PC-9 (cell line): ENCODE measurements at regions of chr15 and their contacts with region 1.

Region 1: GRCh38 chr15:67065444-67066093 is at the start of gene SMAD3:
- DNase-seq: peak; percentile 73 to 92
- H3K4me3 ChIP-seq: peak within 1 kb of the TSS; percentile 88
- H3K27ac ChIP-seq: peak within 1 kb of the TSS; percentile 87
- H3K4me1 ChIP-seq: peaks cover 21% of the 10 kb centered on the region
- H3K27me3 ChIP-seq: no peaks in the 10 kb centered on the region
- CTCF ChIP-seq: no peak
- total RNA-seq, gene SMAD3: 99.5 and 109 TPM in 2 replicates

Region 2: GRCh38 chr15:66883322-66883911 is 182.2 kb before region 1 on chr15:
- CTCF ChIA-PET with region 1: no interaction called
- POLR2A ChIA-PET with region 1: no interaction called
- intact Hi-C with region 1: loop called (anchors 1 kb)
- DNase-seq: peak; percentile 96 to 97
- H3K4me3 ChIP-seq: no peak overlapping the region
- H3K27ac ChIP-seq: peak overlapping the region; percentile 74
- H3K4me1 ChIP-seq: peaks cover 35% of the 10 kb centered on the region
- H3K27me3 ChIP-seq: no peaks in the 10 kb centered on the region
- CTCF ChIP-seq: no peak

Region 3: GRCh38 chr15:67024314-67024997 is 41.1 kb before region 1 on chr15:
- CTCF ChIA-PET with region 1: no interaction called
- POLR2A ChIA-PET with region 1: no interaction called
- intact Hi-C with region 1: loop called (anchors 2 kb)
- DNase-seq: peak; percentile 75 to 83
- H3K4me3 ChIP-seq: no peak overlapping the region
- H3K27ac ChIP-seq: peak overlapping the region; percentile 82
- H3K4me1 ChIP-seq: peaks cover 65% of the 10 kb centered on the region
- H3K27me3 ChIP-seq: no peaks in the 10 kb centered on the region
- CTCF ChIP-seq: no peak

Region 4: GRCh38 chr15:67091071-67091979 is 25.8 kb after region 1 on chr15:
- CTCF ChIA-PET with region 1: no interaction called
- POLR2A ChIA-PET with region 1: no interaction called
- intact Hi-C with region 1: loop called (anchors 1 kb)
- DNase-seq: peak; percentile 95
- H3K4me3 ChIP-seq: peak overlapping the region; percentile 39; the same call in 1 of the 2 replicates
- H3K27ac ChIP-seq: peak overlapping the region; percentile 96
- H3K4me1 ChIP-seq: peaks cover 74% of the 10 kb centered on the region
- H3K27me3 ChIP-seq: no peaks in the 10 kb centered on the region
- CTCF ChIP-seq: no peak

Region 5: GRCh38 chr15:67150028-67150860 is 84.7 kb after region 1 on chr15:
- CTCF ChIA-PET with region 1: no interaction called
- POLR2A ChIA-PET with region 1: interaction called, 7 read pairs
- intact Hi-C with region 1: loop called (anchors 1 kb)
- DNase-seq: peak; percentile 90 to 97
- H3K4me3 ChIP-seq: peak overlapping the region; percentile 42; the same call in 1 of the 2 replicates
- H3K27ac ChIP-seq: peak overlapping the region; percentile 96
- H3K4me1 ChIP-seq: peaks cover 77% of the 10 kb centered on the region
- H3K27me3 ChIP-seq: no peaks in the 10 kb centered on the region
- CTCF ChIP-seq: no peak

Region 6: DNA sequence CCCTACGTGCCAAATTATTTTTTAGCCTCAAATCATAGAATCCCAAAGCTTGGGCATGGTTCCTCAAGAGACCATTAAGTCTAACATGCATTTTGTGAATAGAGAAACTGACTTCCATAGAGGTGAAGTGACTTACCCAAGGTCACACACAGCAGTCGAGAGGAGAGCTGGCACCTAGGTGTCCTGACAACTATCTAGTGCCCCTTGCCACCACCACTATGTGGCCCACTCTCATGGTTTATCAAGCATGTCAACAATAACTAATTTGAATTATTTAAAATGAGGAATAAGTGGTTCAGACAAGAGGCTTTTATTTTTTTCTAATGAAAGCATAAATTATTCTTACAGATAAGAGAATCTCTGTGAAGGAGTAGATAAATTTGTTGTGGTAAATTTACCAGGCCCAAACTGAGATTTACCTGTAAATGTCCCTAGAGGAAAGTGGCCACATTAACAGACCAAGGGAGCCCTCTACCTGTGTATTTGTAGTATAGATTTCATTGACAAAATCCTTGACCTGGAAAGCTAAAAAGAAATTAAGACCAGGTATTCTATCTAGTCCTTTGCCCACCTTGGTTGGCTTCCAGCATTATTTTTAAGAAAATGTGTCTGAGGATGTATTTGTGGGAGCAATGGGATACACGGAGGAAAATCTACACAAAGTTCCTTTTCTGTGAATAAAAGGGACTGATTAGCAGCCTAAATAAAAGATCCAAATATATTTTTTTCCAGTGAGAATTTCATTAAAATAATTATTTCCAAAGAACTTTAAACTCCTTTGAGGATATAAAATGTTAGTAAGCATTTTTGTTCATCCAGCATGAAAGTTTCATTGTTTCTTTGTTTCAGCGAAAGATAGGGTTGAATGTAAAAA is 238.2 kb after region 1 on chr15:
- CTCF ChIA-PET with region 1: interaction called, 4 read pairs
- POLR2A ChIA-PET with region 1: no interaction called
- intact Hi-C with region 1: loop called (anchors 5 kb)
- DNase-seq: no peak
- H3K4me3 ChIP-seq: no peak overlapping the region
- H3K27ac ChIP-seq: no peak overlapping the region
- H3K4me1 ChIP-seq: no peaks in the 10 kb centered on the region
- H3K27me3 ChIP-seq: no peaks in the 10 kb centered on the region
- CTCF ChIP-seq: peak; percentile 66